ENCODE measurements at regions of chr3 and their contacts with region 1.

Region 1: GRCh38 chr3:42647821-42648459 is 5.6 kb upstream of the ZBTB47 start:
- DNase-seq: no peak
- ATAC-seq: no peak

Region 2: GRCh38 chr3:42581709-42582473 is 66.0 kb before region 1 on chr3 and contains the start of gene SEC22C:
- intact Hi-C with region 1: no loop called
- DNase-seq: peak; percentile 96
- ATAC-seq: peak; percentile 99
- total RNA-seq, gene SEC22C: 24.4 to 29.8 TPM

Region 3: GRCh38 chr3:42608581-42608980 is 39.4 kb before region 1 on chr3:
- intact Hi-C with region 1: loop called in 1 of 2 experiments (anchors 5 kb)
- DNase-seq: no peak
- ATAC-seq: peak; percentile 13 to 33

Measured in left cardiac atrium (tissue), 4 donors.